ENCODE measurements at regions of chr17 and their contacts with region 1.

Region 1: DNA sequence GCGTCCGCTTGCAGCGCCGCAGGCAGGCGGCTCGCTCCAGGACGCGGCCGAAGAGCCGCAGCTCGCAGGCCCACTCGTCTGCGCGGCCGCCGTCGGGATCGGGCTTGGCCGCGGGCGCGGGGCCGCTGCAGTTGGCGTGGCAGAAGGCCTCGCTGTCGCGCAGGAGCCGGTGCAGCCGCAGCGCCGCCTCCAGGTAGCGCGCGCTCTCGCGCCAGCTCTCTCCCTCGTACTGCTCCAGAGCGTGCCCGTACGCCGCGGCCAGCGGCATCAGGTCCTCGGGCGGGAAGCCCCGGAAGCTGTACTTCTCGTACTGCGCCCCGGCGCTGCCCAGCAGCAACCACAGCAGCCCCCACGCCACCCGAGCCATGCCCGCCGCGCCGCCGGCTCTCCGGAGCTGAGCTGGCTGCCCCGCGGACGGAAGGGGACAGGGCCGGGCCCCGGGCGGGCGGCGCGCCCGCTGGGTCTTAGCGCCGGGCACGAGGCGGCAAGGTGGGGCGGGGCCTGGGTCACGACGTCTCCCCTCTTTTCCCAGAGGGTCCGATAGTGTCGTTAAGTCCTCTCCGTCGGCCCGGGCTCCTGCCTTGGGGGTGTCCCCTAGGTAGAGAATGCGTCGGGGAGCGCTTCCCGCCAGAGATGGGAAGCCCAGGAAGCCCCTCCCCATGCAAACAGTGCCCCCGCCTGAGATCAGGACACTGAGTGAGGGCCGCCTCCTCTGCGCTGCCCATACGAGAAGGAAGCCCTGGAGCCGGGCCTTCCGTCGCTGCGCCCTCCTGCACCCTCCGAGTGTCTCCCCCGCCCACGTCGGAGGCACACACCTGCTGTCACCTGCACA is at the start of gene P3H4:
- DNase-seq: peak; percentile 68 to 83 (median 79)
- ATAC-seq: peak; percentile 94
- H3K4me3 ChIP-seq: peak within 1 kb of the TSS; percentile 81
- H3K4me3 Mint-ChIP-seq: peak within 1 kb of the TSS; percentile 89 to 99 (median 94)
- H3K27ac ChIP-seq: peak within 1 kb of the TSS; percentile 48
- H3K27ac Mint-ChIP-seq: peak within 1 kb of the TSS in 7 of 9 donors; percentile 50 to 81 (median 68)
- H3K4me1 ChIP-seq: peaks cover 10 to 16% of the 10 kb centered on the region in 2 donors
- H3K4me1 Mint-ChIP-seq: peaks cover 14 to 26% (median 21%) of the 10 kb centered on the region in 7 donors
- H3K27me3 ChIP-seq: no peaks in the 10 kb centered on the region
- H3K27me3 Mint-ChIP-seq: peaks cover 0 to 22% (median 0%) of the 10 kb centered on the region in 5 donors
- total RNA-seq, gene P3H4: 3.6 to 7.0 (median 5.3) TPM

Region 2: GRCh38 chr17:41801374-41802271 is 10.1 kb before region 1 on chr17:
- CTCF ChIA-PET with region 1: interaction called, 19 read pairs
- POLR2A ChIA-PET with region 1: no interaction called
- intact Hi-C with region 1: no loop called
- DNase-seq: peak; percentile 45 to 78 (median 68)
- ATAC-seq: peak; percentile 91
- H3K4me3 ChIP-seq: no peak overlapping the region
- H3K4me3 Mint-ChIP-seq: no peak overlapping the region
- H3K27ac ChIP-seq: no peak overlapping the region
- H3K27ac Mint-ChIP-seq: no peak overlapping the region
- H3K4me1 ChIP-seq: peaks cover 0 to 3% of the 10 kb centered on the region in 2 donors
- H3K4me1 Mint-ChIP-seq: peaks cover 4 to 14% (median 5%) of the 10 kb centered on the region in 7 donors
- H3K27me3 ChIP-seq: no peaks in the 10 kb centered on the region
- H3K27me3 Mint-ChIP-seq: no peaks in the 10 kb centered on the region

Region 3: DNA sequence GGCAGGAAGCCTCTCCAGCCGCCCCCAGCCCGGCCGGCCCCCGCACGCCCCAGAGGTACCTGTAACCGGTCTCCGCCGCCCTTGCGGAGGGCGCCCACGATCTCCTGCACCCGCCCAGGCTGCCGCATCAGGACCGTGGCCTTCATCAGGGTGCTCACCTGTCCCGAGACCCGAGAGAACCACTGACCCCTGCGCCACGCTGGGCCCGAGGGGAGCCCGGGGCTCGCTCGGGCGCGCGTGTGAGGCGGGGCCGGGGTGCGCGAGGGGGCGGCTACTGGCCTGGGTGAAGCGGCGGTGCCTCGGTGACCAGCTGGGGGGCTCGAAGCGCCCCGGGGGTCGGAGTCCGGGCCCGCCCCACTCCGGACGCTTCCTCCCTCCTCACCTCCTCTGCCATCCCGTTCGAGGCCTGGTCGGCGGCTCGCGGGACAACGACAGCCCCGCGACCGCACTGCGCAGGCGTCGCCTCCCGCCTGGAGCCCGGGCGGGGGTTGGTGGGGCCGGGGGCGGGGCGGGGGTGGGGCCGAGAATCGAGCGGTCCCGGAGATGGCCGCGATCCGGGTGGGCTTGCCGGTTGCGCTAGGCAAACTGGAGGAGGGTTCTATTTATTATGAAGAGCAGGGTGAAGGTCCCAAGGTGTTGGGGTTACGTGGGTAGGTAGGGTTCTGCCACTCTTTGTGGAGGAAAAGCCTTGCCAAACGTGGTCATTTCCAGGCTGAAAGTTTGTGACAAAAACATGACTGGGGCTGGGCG is 24.2 kb after region 1 on chr17 and contains the start of gene NT5C3B:
- CTCF ChIA-PET with region 1: no interaction called
- POLR2A ChIA-PET with region 1: interaction called, 3 read pairs
- intact Hi-C with region 1: loop called in 1 of 2 experiments (anchors 1 kb)
- DNase-seq: peak; percentile 20 to 66 (median 49)
- ATAC-seq: peak; percentile 93
- H3K4me3 ChIP-seq: peak within 1 kb of the TSS; percentile 62
- H3K4me3 Mint-ChIP-seq: peak within 1 kb of the TSS; percentile 77 to 92 (median 89)
- H3K27ac ChIP-seq: peak within 1 kb of the TSS; percentile 81
- H3K27ac Mint-ChIP-seq: peak within 1 kb of the TSS; percentile 75 to 92 (median 86)
- H3K4me1 ChIP-seq: peaks cover 9 to 14% of the 10 kb centered on the region in 2 donors
- H3K4me1 Mint-ChIP-seq: peaks cover 10 to 21% (median 16%) of the 10 kb centered on the region in 7 donors
- H3K27me3 ChIP-seq: no peaks in the 10 kb centered on the region
- H3K27me3 Mint-ChIP-seq: peaks cover 0 to 4% (median 0%) of the 10 kb centered on the region in 5 donors
- total RNA-seq, gene NT5C3B: 26.8 to 41.7 (median 37.2) TPM

Region 4: DNA sequence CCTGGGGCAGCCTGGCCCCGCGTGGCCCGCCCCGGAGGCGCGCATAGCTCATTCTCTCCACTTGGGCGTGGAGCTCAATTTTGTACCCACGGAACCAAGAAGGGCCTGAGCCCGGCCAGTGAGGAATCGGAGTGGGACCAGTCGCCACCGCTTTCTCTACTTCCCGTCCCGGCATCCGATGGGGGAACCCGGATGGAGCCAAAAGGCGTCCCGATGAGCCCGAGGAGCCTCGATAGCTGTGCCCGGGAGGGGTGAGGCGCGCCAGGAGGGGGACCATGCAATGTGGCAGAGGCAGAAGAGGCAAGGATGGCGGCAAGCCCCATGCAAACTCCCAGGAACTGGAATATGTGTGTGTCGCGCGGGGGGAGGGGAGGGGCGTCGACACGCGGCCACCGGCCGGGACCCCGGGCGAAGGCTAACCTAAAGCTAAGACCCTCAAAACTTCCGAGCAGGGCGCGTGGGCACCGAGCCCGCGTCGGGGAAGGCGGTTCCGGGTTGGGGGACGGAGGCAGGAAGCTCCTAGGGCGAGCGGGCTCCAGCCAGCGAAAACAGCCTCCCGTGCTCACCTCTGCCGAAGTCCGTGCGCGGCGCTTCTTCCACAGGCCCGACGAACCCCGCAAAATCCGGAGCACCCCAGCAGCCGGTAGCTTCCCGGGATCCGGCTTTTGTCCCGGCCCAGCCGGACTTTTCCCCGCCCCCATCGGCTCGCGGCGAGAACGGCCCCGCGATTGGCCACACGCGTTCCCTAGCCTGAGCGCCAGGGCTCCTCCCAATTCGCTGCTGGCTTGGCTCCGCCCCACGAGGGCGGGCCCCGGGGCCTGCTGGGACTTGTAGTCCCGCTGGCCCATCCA is 106.8 kb after region 1 on chr17 and contains the start of gene ACLY:
- CTCF ChIA-PET with region 1: no interaction called
- POLR2A ChIA-PET with region 1: no interaction called
- intact Hi-C with region 1: loop called in 1 of 2 experiments (anchors 1 kb)
- DNase-seq: peak; percentile 88 to 99 (median 92)
- ATAC-seq: peak; percentile 100
- H3K4me3 ChIP-seq: peak within 1 kb of the TSS; percentile 94
- H3K4me3 Mint-ChIP-seq: peak within 1 kb of the TSS; percentile 84 to 99 (median 89)
- H3K27ac ChIP-seq: peak within 1 kb of the TSS; percentile 79
- H3K27ac Mint-ChIP-seq: peak within 1 kb of the TSS; percentile 48 to 97 (median 78)
- H3K4me1 ChIP-seq: peaks cover 8 to 14% of the 10 kb centered on the region in 2 donors
- H3K4me1 Mint-ChIP-seq: peaks cover 29 to 48% (median 35%) of the 10 kb centered on the region in 7 donors
- H3K27me3 ChIP-seq: no peaks in the 10 kb centered on the region
- H3K27me3 Mint-ChIP-seq: no peaks in the 10 kb centered on the region
- total RNA-seq, gene ACLY: 59.2 to 154 (median 70.8) TPM

Measured in naive thymus-derived CD4-positive, alpha-beta T cell (primary cell).